ENCODE measurements at regions of chr2 and their contacts with region 1.

Region 1: DNA sequence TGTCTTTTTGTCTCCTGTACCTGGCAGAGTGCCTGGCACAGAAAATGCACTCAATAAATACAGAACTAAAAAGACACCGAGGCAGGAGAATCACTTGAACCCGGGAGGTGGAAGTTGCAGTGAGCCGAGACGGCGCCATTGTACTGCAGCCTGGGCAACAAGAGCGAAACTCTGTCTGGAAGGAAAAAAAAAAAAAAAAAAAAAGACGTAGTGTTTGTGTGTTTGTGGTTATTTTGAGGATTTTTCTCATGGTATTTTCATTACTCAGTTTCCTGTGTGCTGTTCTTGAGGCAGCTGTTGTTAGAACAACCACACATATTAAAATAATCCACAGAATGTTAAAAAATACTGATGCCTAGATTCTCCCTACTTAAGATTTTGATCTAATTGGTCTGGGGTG is 519.2 kb upstream of the SPHKAP start:
- DNase-seq: no peak
- H3K4me3 ChIP-seq: no peak overlapping the region
- H3K27ac ChIP-seq: no peak overlapping the region
- H3K4me1 ChIP-seq: no peaks in the 10 kb centered on the region
- H3K27me3 ChIP-seq: no peaks in the 10 kb centered on the region
- CTCF ChIP-seq: no peak
- POLR2A ChIP-seq: no peak

Region 2: GRCh38 chr2:229273723-229274338 is 573.2 kb after region 1 on chr2:
- intact Hi-C with region 1: loop called (anchors 10 kb)
- DNase-seq: no peak
- H3K4me3 ChIP-seq: peak overlapping the region; percentile 15 to 20
- H3K27ac ChIP-seq: no peak overlapping the region
- H3K4me1 ChIP-seq: peaks cover 15% of the 10 kb centered on the region
- H3K27me3 ChIP-seq: no peaks in the 10 kb centered on the region
- CTCF ChIP-seq: peak; percentile 62 to 73 (median 62)
- POLR2A ChIP-seq: no peak